ENCODE measurements at regions of chr3 and their contacts with region 1.

Region 1: GRCh38 chr3:41893977-41894376 is 67.9 kb downstream of the ULK4 start:
- DNase-seq: peak in 2 of 4 donors; percentile 8 to 46
- ATAC-seq: peak; percentile 46
- H3K4me3 ChIP-seq: no peak overlapping the region
- H3K27ac ChIP-seq: no peak overlapping the region
- H3K4me1 ChIP-seq: no peaks in the 10 kb centered on the region
- H3K27me3 ChIP-seq: no peaks in the 10 kb centered on the region
- CTCF ChIP-seq: peak; percentile 34 to 44

Region 2: GRCh38 chr3:41338276-41338675 is 555.7 kb before region 1 on chr3:
- intact Hi-C with region 1: no loop called
- DNase-seq: no peak
- ATAC-seq: no peak
- H3K4me3 ChIP-seq: no peak overlapping the region
- H3K27ac ChIP-seq: no peak overlapping the region
- H3K4me1 ChIP-seq: no peaks in the 10 kb centered on the region
- H3K27me3 ChIP-seq: no peaks in the 10 kb centered on the region
- CTCF ChIP-seq: no peak

Region 3: DNA sequence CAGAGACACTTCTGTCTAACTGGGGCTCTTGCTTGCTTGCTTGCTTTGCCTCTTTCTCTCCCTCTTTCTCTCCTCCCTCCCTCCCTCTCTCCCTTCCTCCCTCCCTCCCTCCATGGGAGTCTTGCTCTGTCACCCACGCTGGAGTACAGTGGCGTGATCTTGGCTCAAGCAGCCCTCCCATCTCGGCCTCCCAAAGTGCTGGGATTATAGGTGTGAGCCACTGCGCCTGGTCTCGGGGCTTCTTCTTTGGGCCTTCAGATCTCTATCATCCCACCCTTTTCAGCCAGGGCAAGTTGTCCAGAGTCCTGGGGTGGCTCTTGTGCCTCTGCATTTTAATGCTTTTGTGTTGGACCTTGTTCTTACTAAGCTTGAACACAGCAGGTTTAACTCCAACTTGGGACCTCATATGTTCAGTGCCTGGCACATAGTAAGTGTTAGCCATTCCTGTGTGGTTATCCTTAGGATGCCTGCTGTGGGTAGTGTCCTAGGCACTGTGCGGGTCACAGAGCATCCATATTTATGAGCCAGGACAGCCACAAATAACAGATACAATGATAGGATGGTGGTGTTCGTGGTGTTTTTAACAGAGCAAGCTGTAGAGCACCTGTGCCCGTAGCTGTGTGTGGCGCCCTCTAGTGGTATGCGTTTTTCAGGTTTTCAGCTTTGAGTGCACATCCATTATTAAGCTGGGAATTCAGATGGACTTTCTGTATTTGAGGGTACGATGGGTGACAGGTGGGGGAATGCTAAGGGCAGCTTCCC is 296.9 kb after region 1 on chr3:
- intact Hi-C with region 1: loop called in 1 of 2 experiments (anchors 10 kb)
- DNase-seq: peak in 2 of 4 donors; percentile 32 to 59
- ATAC-seq: peak; percentile 82
- H3K4me3 ChIP-seq: no peak overlapping the region
- H3K27ac ChIP-seq: no peak overlapping the region
- H3K4me1 ChIP-seq: peaks cover 0 to 13% of the 10 kb centered on the region in 2 donors
- H3K27me3 ChIP-seq: no peaks in the 10 kb centered on the region
- CTCF ChIP-seq: peak; percentile 67 to 75

Region 4: GRCh38 chr3:42443819-42444436 is 550.0 kb after region 1 on chr3:
- intact Hi-C with region 1: loop called in 1 of 2 experiments (anchors 10 kb)
- DNase-seq: peak; percentile 52 to 93 (median 80)
- ATAC-seq: peak; percentile 99
- H3K4me3 ChIP-seq: no peak overlapping the region
- H3K27ac ChIP-seq: no peak overlapping the region
- H3K4me1 ChIP-seq: no peaks in the 10 kb centered on the region
- H3K27me3 ChIP-seq: peaks cover 0 to 6% of the 10 kb centered on the region in 2 donors
- CTCF ChIP-seq: peak; percentile 95 to 99

Measured in left lung (tissue), 14 donors.